ENCODE measurements at regions of chr9 and their contacts with region 1.

Region 1: GRCh38 chr9:79165019-79165780 is 406.6 kb upstream of the TLE4 start:
- DNase-seq: no peak
- H3K4me3 ChIP-seq: no peak overlapping the region
- H3K27ac ChIP-seq: no peak overlapping the region
- H3K4me1 ChIP-seq: no peaks in the 10 kb centered on the region
- H3K27me3 ChIP-seq: peaks cover 0 to 8% of the 10 kb centered on the region in 2 donors
- CTCF ChIP-seq: no peak
- POLR2A ChIP-seq: no peak

Region 2: DNA sequence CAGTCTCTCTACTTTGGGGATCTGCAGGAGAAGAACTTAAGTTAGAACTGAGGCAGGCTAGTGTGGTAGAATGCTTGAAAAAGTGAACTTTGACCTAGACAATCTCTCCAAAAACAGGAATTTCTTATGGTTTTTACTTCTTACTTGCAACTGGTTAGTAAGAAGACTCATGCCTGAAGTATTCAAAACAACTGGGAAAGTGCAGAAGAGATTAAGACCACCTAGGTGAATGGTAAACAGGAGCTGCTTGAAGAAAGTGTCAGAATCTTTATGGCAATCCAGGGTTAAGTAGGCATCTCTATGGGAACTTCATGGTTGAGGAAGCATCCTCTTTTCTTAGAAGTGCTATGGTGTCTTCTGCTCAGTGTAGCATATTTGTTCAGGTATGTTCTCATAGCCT is 22.0 kb before region 1 on chr9:
- intact Hi-C with region 1: loop called (anchors 1 kb)
- DNase-seq: no peak
- H3K4me3 ChIP-seq: no peak overlapping the region
- H3K27ac ChIP-seq: no peak overlapping the region
- H3K4me1 ChIP-seq: no peaks in the 10 kb centered on the region
- H3K27me3 ChIP-seq: no peaks in the 10 kb centered on the region
- CTCF ChIP-seq: no peak
- POLR2A ChIP-seq: no peak

Region 3: GRCh38 chr9:79312686-79313421 is 147.7 kb after region 1 on chr9:
- intact Hi-C with region 1: no loop called
- DNase-seq: no peak
- H3K4me3 ChIP-seq: no peak overlapping the region
- H3K27ac ChIP-seq: no peak overlapping the region
- H3K4me1 ChIP-seq: no peaks in the 10 kb centered on the region
- H3K27me3 ChIP-seq: no peaks in the 10 kb centered on the region
- CTCF ChIP-seq: no peak
- POLR2A ChIP-seq: no peak

Measured in breast epithelium (tissue), 4 donors.